Heart right ventricle (tissue), 16 donors: ENCODE measurements at regions of chr1 and their contacts with region 1.

Region 1: GRCh38 chr1:209815931-209816341 is 10.0 kb upstream of the IRF6 start:
- DNase-seq: no peak
- ATAC-seq: peak in 1 of 8 donors; percentile 20
- H3K4me3 ChIP-seq: no peak overlapping the region
- H3K27ac ChIP-seq: no peak overlapping the region
- H3K4me1 ChIP-seq: no peaks in the 10 kb centered on the region
- H3K27me3 ChIP-seq: peaks cover 0 to 22% (median 0%) of the 10 kb centered on the region in 7 donors
- CTCF ChIP-seq: no peak

Region 2: GRCh38 chr1:209797978-209798639 is 17.8 kb before region 1 on chr1:
- intact Hi-C with region 1: loop called in 1 of 10 experiments (anchors 1 kb)
- DNase-seq: no peak
- ATAC-seq: no peak
- H3K4me3 ChIP-seq: no peak overlapping the region
- H3K27ac ChIP-seq: no peak overlapping the region
- H3K4me1 ChIP-seq: peaks cover 4 to 33% (median 16%) of the 10 kb centered on the region in 9 donors
- H3K27me3 ChIP-seq: peaks cover 0 to 18% (median 0%) of the 10 kb centered on the region in 7 donors
- CTCF ChIP-seq: peak in 1 of 9 donors; percentile 7

Region 3: DNA sequence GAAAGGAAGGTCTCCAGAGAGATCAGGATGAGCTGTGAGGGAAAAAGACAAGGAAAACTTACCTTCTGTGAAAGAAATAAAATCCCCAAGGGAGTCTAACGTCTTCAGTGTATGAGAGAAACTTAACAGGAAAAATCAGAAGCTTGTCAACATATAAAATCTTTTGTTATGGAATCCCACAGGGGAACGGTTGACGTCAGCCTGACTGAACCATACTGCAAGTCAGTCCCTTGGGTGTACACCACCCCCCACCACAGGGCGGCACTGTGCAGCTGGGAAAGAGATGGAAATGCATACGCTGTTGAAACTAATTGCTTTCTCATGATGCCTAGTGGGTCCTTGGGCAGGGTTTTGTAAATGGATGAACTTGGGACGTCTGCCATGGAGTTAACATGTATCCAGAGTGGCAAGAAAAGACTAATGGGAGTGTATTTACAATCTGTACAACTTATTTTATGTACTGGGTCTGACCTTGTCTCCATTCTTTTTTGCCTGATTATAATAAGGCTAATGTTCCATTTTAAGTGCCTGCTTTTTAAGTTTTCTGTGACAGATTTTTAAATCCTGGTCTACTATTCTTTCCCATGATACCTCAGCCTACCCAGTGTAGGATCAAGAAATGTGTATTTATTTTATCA is 34.5 kb after region 1 on chr1:
- intact Hi-C with region 1: no loop called
- DNase-seq: peak; percentile 28 to 34
- ATAC-seq: peak in 4 of 8 donors; percentile 20 to 46 (median 40)
- H3K4me3 ChIP-seq: no peak overlapping the region
- H3K27ac ChIP-seq: no peak overlapping the region
- H3K4me1 ChIP-seq: peaks cover 0 to 5% (median 0%) of the 10 kb centered on the region in 9 donors
- H3K27me3 ChIP-seq: no peaks in the 10 kb centered on the region
- CTCF ChIP-seq: peak in 7 of 9 donors; percentile 30 to 55 (median 35)

Region 4: GRCh38 chr1:209895709-209896108 is 79.8 kb after region 1 on chr1:
- intact Hi-C with region 1: no loop called
- DNase-seq: no peak
- ATAC-seq: no peak
- H3K4me3 ChIP-seq: no peak overlapping the region
- H3K27ac ChIP-seq: no peak overlapping the region
- H3K4me1 ChIP-seq: no peaks in the 10 kb centered on the region
- H3K27me3 ChIP-seq: peaks cover 0 to 9% (median 0%) of the 10 kb centered on the region in 7 donors
- CTCF ChIP-seq: no peak